Naive thymus-derived CD8-positive, alpha-beta T cell (primary cell): ENCODE measurements at regions of chr3 and their contacts with region 1.

Region 1: DNA sequence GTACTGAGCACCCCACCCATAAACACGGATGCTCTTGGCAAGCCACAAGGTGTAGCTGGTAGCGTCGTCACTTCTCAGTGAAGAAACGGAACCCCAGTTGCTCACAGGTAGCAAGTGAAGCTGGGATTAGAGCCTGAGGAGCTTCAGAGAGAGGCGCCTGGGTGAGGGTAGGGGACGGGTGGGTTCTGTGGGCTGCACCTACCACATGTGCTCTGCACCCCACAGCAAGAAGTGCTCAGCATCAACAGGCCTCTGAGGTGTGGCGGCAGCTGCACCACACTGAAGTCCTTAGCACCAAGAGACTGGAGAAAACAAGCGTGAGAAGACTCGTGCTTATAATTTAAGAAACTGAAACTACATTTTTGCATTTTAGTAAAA is 9.8 kb downstream of the MAP6D1 start:
- DNase-seq: peak in 4 of 10 donors; percentile 28 to 54 (median 42)
- ATAC-seq: peak; percentile 80 to 85
- H3K4me3 Mint-ChIP-seq: peak overlapping the region; percentile 6 to 84 (median 69)
- H3K27ac Mint-ChIP-seq: peak overlapping the region; percentile 61 to 95 (median 90)
- H3K4me1 Mint-ChIP-seq: peaks cover 7 to 24% (median 20%) of the 10 kb centered on the region in 4 donors
- H3K27me3 Mint-ChIP-seq: no peaks in the 10 kb centered on the region

Region 2: DNA sequence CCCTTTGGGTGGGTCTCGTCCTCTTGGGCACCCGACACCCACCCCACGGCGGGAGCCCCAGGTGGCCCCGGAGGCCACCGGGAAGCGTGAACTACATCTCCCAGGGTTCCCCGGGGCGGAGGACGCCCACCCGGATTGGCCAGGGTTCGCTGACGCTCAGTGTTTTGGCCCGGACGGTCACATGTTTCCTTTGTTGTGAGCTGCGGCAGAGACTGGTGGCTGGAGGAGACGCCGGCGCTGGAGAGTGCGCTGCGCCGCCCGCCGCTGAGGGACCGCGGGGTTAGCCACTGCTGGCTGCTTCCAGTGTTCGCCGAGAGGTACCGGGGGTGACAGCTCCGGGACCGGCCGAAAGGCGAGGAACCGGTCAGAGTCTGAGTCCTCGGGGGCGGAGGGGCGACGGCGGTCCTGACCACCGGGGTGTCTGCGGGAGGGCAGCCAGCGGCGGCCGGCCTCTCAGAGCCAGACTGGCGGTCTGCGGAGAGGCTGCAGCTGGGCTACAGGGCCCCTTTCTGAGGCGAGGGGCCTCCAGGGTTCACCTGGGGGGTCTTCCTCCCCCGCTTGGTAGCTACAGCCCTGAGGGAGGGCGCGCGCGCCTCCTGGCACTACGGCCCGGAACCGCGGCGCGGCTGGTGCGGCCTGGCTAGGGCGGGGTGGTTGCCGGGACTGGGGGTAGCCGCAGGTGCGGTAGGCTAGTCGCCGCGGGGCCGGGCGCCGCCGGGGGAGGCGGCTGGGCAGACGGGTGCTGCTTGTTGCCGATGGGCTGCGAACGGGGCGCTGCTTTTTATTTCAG is 179.9 kb before region 1 on chr3 and contains the start of gene KLHL24:
- POLR2A ChIA-PET with region 1: no interaction called
- DNase-seq: peak; percentile 79 to 95 (median 88)
- ATAC-seq: peak; percentile 76 to 80
- H3K4me3 Mint-ChIP-seq: peak within 1 kb of the TSS; percentile 91 to 97 (median 95)
- H3K27ac Mint-ChIP-seq: peak within 1 kb of the TSS; percentile 89 to 99 (median 98)
- H3K4me1 Mint-ChIP-seq: peaks cover 14 to 47% (median 36%) of the 10 kb centered on the region in 4 donors
- H3K27me3 Mint-ChIP-seq: peaks cover 0 to 1% (median 0%) of the 10 kb centered on the region in 5 donors
- polyA plus RNA-seq, gene KLHL24: 42.4 to 46.3 (median 44.2) TPM

Region 3: DNA sequence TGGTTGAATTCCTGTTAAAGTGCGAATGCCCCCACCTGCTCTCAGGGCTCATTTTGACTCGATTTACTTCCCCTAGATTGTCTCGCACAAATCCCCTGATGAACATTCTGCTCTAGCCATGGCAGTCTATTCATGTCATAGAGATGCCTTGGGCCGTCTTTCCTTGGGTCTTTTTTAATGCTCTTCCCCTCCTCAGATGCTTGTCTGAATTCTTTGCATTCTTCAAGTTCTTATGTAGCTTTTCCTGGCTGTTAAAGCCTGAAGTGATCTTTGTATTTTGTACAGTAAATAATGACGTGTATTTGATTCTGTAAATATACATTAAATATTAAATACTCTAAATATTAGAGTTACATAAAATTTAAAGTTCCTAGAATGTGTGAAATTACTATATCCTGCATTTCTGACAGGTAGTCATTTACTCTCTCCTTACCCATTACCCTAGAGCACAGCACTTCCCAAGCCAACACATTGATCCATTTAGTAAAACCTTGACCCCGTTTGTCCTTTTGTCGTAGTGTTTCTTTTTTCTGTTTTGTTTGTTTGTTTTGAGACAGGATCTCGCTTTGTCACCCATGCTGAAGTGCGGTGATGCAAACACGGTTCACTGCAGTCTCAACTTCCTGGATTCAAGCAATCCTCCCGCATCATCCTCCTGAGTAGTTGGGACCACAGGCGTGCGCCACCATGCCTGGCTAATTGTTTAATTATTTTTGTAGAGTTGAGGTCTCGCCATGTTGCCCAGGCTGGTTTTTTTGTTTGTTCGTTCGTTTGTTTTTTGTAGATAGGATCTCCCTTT is 70.1 kb before region 1 on chr3:
- POLR2A ChIA-PET with region 1: no interaction called
- DNase-seq: no peak
- ATAC-seq: no peak
- H3K4me3 Mint-ChIP-seq: no peak overlapping the region
- H3K27ac Mint-ChIP-seq: peak overlapping the region in 3 of 10 donors; percentile 36 to 71 (median 52)
- H3K4me1 Mint-ChIP-seq: no peaks in the 10 kb centered on the region
- H3K27me3 Mint-ChIP-seq: no peaks in the 10 kb centered on the region

Region 4: DNA sequence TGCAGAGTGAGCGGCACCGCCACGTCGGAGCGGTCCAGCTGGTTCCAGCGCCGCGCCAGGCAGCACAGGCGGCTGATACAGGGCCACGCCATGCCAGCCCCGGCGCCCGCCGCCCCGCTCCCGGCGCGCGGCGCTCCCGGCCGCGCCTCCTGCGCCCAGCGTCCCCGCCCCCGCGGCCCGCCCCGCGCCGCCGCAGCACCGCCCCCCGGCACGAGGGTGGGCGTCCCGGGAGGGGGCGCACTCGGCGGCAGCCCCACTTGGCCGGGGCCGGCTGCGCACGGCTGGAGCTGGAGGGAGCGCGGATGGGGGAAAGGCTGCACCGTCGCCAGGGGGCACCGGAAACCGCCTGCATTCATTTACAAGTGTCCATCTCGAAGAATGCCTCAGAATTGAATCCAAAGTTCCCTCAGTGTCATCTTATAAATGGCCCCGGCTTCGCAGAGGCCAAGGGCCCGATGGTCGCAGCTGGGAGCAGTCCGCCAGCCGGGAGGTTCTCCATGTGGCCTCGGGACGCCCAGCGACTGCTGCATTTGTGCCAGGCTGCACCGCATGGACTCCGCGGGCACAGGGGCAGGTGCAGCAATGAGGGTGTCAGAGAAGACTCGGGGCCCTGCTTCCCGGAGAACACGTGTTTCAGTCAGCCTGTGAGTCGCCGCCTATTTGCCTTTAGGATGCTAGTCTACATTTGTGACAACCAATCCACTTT is 10.1 kb after region 1 on chr3 and contains the start of gene MAP6D1:
- POLR2A ChIA-PET with region 1: interaction called, 22 read pairs
- DNase-seq: peak; percentile 19 to 73 (median 59)
- ATAC-seq: peak; percentile 76 to 84
- H3K4me3 Mint-ChIP-seq: peak within 1 kb of the TSS; percentile 76 to 90 (median 84)
- H3K27ac Mint-ChIP-seq: peak within 1 kb of the TSS; percentile 49 to 91 (median 80)
- H3K4me1 Mint-ChIP-seq: peaks cover 6 to 19% (median 14%) of the 10 kb centered on the region in 4 donors
- H3K27me3 Mint-ChIP-seq: no peaks in the 10 kb centered on the region
- polyA plus RNA-seq, gene MAP6D1: 0.58 to 2.9 (median 1.0) TPM